ENCODE measurements at regions of chr17 and their contacts with region 1.

Region 1: DNA sequence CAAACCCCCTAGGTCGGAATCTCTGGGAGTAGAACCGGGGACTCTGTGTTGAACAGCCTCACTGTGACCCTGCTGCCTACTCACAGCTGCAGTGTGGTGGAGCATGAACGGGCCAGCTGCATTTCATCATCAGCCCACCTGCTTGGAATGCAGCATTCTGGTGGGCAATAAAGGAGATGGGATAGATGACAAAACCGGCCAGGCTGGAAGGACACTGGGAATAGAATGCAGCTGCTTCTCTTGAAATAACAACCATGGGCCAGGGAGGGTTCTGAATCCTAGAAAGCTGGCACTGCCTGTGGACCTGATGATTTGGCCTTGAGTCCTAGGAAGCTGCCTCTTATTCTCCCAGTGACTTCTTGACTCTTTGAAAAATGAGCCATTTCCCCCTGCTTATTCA is 23.5 kb downstream of the CFAP97D1 start:
- DNase-seq: no peak
- ATAC-seq: no peak
- H3K4me3 ChIP-seq: no peak overlapping the region
- H3K27ac ChIP-seq: no peak overlapping the region
- H3K4me1 ChIP-seq: no peaks in the 10 kb centered on the region
- H3K27me3 ChIP-seq: no peaks in the 10 kb centered on the region
- CTCF ChIP-seq: no peak

Region 2: DNA sequence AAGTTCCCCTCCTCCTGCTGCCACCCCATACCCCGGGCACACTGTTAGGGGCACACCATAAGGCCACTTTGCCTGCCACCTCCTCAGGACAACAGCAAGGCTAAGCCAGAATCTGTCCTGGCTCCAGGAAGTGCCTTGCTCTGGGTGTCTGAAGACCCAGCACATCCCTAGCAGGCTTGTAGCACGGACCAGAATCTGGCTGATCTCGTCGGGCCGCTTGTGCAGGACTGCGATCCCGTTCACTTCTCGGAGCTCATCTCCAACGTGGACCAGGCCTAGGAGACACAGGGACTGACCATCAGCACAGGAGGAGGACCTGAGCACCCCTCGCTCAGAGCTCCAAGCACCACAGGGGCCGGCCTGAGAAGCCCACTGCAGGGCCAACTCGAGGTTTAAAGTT is 21.8 kb after region 1 on chr17:
- CTCF ChIA-PET with region 1: no interaction called
- POLR2A ChIA-PET with region 1: interaction called, 10 read pairs
- in situ Hi-C with region 1: no loop called
- intact Hi-C with region 1: no loop called
- DNase-seq: no peak
- ATAC-seq: no peak
- H3K4me3 ChIP-seq: no peak overlapping the region
- H3K27ac ChIP-seq: no peak overlapping the region
- H3K4me1 ChIP-seq: no peaks in the 10 kb centered on the region
- H3K27me3 ChIP-seq: no peaks in the 10 kb centered on the region
- CTCF ChIP-seq: no peak

Measured in Panc1 (cell line).